IMR-90 (cell line): ENCODE measurements at regions of chr3 and their contacts with region 1.

Region 1: DNA sequence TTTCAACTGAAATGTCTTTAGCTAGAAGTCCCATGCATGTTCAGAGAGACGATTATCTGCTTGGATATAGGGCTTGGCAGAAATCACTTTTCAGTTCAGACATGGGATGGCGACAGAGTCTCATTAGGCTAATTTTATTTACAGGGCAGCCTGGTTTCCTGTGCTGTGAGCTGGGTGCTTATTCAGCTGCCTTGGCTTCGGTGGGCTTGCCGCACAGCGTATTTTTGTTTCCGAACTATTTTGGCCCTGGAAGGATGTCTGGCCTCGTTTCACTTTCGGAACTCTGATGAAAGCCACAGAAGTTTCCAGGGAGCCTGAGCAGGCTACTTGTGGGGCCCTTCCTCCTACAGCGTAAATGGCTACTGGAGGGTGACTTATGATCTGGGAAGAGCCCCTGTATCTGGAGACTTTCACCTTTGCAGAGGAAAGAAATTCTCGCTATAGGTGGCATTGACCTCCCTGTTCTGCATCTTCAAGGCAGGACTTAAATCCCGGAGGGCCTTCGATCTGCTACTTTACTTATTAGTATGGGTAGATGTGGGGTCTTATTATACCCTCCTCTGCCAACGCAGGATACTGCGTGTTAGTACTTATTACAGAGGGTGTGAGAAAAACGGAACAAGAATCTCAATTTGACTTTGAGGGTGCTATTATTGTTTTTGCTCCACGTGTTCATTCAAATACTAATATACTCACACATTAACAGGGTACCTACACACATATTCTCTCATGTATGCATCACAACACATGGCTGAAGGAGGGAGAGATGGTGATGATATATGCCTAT is 364.0 kb upstream of the RBMS3 start:
- DNase-seq: peak; percentile 65
- ATAC-seq: peak; percentile 66
- H3K4me3 ChIP-seq: peak overlapping the region; percentile 38
- H3K27ac ChIP-seq: peak overlapping the region; percentile 53
- H3K4me1 ChIP-seq: peaks cover 4% of the 10 kb centered on the region
- H3K27me3 ChIP-seq: no peaks in the 10 kb centered on the region
- CTCF ChIP-seq: peak; percentile 49
- POLR2A ChIP-seq: no peak
- RAD21 ChIP-seq: peak; percentile 70

Region 2: DNA sequence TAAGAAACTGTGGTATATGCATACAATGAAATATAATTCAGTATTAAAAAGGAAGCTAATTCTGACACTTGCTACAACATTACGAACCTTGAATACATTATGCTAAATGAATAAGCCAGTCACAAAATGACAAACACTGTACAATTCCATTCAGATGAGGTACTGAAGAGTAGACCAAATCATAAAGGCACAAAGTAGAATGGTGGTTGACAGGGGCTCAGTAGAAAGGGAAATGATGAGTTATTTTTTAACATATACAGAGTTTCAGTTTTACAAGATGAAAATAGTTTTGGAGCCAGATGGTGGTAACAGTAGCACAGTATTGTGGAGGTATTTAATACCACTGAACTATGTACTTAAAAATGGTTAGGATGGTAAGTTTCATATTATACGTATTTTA is 109.4 kb after region 1 on chr3:
- CTCF ChIA-PET with region 1: no interaction called
- POLR2A ChIA-PET with region 1: no interaction called
- dilution Hi-C with region 1: no loop called
- in situ Hi-C with region 1: no loop called
- intact Hi-C with region 1: no loop called
- DNase-seq: no peak
- ATAC-seq: no peak
- H3K4me3 ChIP-seq: no peak overlapping the region
- H3K27ac ChIP-seq: no peak overlapping the region
- H3K4me1 ChIP-seq: no peaks in the 10 kb centered on the region
- H3K27me3 ChIP-seq: no peaks in the 10 kb centered on the region
- CTCF ChIP-seq: no peak
- POLR2A ChIP-seq: no peak
- RAD21 ChIP-seq: no peak

Region 3: DNA sequence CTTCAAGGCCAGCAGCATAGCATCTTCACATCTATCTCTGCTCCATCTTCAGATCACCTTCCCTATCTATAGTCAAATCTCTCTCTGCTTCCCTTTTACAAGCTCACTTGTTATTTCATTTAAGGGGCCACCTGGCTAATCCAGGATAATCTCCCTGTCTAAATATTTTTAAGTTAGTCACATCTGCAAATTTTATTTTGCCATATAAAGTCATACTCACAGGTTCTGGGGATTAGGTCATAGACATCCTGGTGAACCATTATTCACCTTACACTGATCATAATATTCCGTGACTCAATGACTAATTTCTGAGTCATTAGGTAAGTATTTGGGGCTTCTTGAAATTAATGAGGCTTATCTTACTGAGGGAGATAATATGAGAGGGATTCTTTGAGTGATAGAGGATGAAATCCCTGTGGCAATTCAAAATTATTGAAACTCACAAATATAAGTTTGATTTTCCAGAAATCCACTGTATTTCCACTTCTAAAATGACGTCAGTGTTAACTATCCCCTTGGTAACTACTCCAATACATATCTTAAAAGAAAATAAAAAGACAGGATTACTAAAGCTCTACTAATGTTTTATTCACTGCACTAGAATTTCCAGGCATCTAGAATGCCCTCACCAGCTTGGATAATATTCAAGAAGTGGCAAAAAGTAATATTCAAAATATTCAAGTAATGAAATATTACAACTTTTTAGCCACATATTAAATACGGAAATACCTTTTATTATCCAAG is 270.2 kb after region 1 on chr3:
- CTCF ChIA-PET with region 1: interaction called, 5 read pairs
- POLR2A ChIA-PET with region 1: no interaction called
- dilution Hi-C with region 1: no loop called
- in situ Hi-C with region 1: no loop called
- intact Hi-C with region 1: loop called (anchors 5 kb)
- DNase-seq: peak; percentile 92
- ATAC-seq: peak; percentile 25
- H3K4me3 ChIP-seq: no peak overlapping the region
- H3K27ac ChIP-seq: peak overlapping the region; percentile 78
- H3K4me1 ChIP-seq: peaks cover 16% of the 10 kb centered on the region
- H3K27me3 ChIP-seq: no peaks in the 10 kb centered on the region
- CTCF ChIP-seq: no peak
- POLR2A ChIP-seq: no peak
- RAD21 ChIP-seq: no peak

Region 4: DNA sequence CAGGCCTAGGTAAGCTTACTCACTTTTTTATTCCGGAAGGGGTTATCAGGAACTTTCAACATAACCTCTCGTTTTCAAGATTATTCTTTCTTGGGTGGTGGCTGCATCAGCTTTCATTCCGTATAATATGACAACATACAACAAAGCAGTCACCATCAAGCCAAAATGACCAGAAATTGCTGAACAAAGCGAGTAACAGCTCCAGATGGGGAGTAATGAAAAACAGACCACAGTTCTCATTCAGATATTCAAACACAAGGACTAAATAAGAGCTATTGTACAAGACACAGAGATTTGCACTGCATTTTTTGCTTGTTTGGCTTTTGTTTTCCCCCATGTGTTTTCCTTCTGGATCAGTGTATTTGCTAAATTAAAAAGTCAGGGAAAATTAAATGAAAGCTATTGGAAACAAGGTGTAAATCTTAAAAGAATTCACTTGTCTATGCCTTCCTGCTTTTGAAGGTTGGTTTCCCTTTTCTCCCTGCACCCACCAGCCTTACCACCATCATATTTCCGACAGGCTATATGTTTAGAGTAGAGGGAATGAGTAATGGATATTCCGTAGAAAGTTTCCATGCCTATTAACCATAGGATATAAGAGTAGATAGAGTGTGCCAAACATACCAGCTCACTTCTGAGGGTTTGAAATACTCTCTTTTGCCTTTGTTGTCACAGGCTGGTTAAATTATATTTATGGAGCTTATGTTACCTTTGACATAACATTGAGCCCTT is 577.6 kb after region 1 on chr3:
- CTCF ChIA-PET with region 1: no interaction called
- POLR2A ChIA-PET with region 1: no interaction called
- dilution Hi-C with region 1: no loop called
- in situ Hi-C with region 1: no loop called
- intact Hi-C with region 1: loop called (anchors 5 kb)
- DNase-seq: peak; percentile 27
- ATAC-seq: peak; percentile 51; the same call in 1 of the 2 replicates
- H3K4me3 ChIP-seq: no peak overlapping the region
- H3K27ac ChIP-seq: no peak overlapping the region
- H3K4me1 ChIP-seq: no peaks in the 10 kb centered on the region
- H3K27me3 ChIP-seq: no peaks in the 10 kb centered on the region
- CTCF ChIP-seq: no peak
- POLR2A ChIP-seq: no peak
- RAD21 ChIP-seq: no peak